CD4-positive, alpha-beta memory T cell (primary cell): ENCODE measurements at regions of chr16 and their contacts with region 1.

Region 1: GRCh38 chr16:352547-353403 is at the start of gene AXIN1:
- DNase-seq: peak; percentile 97 to 100 (median 99)
- H3K4me3 ChIP-seq: peak within 1 kb of the TSS in 1 of 2 donors; percentile 50
- H3K4me3 Mint-ChIP-seq: peak within 1 kb of the TSS; percentile 92 to 96 (median 93)
- H3K27ac ChIP-seq: peak within 1 kb of the TSS; percentile 57
- H3K27ac Mint-ChIP-seq: peak within 1 kb of the TSS; percentile 88 to 97 (median 94)
- H3K4me1 ChIP-seq: peaks cover 70% of the 10 kb centered on the region
- H3K4me1 Mint-ChIP-seq: peaks cover 25 to 69% (median 51%) of the 10 kb centered on the region in 4 donors
- H3K27me3 ChIP-seq: no peaks in the 10 kb centered on the region
- H3K27me3 Mint-ChIP-seq: no peaks in the 10 kb centered on the region
- total RNA-seq, gene AXIN1: 40.3 to 43.0 TPM

Region 2: GRCh38 chr16:228818-229730 is 123.7 kb before region 1 on chr16 and contains the start of gene LUC7L:
- CTCF ChIA-PET with region 1: interaction called, 9 read pairs
- POLR2A ChIA-PET with region 1: interaction called, 25 read pairs
- intact Hi-C with region 1: loop called (anchors 1 kb)
- DNase-seq: peak; percentile 82 to 89 (median 85)
- H3K4me3 ChIP-seq: peak within 1 kb of the TSS; percentile 48 to 84
- H3K4me3 Mint-ChIP-seq: peak within 1 kb of the TSS; percentile 86 to 96 (median 90)
- H3K27ac ChIP-seq: peak within 1 kb of the TSS; percentile 97
- H3K27ac Mint-ChIP-seq: peak within 1 kb of the TSS; percentile 91 to 98 (median 96)
- H3K4me1 ChIP-seq: peaks cover 23% of the 10 kb centered on the region
- H3K4me1 Mint-ChIP-seq: peaks cover 15 to 41% (median 33%) of the 10 kb centered on the region in 4 donors
- H3K27me3 ChIP-seq: no peaks in the 10 kb centered on the region
- H3K27me3 Mint-ChIP-seq: no peaks in the 10 kb centered on the region
- total RNA-seq, gene LUC7L: 147 to 157 TPM

Region 3: DNA sequence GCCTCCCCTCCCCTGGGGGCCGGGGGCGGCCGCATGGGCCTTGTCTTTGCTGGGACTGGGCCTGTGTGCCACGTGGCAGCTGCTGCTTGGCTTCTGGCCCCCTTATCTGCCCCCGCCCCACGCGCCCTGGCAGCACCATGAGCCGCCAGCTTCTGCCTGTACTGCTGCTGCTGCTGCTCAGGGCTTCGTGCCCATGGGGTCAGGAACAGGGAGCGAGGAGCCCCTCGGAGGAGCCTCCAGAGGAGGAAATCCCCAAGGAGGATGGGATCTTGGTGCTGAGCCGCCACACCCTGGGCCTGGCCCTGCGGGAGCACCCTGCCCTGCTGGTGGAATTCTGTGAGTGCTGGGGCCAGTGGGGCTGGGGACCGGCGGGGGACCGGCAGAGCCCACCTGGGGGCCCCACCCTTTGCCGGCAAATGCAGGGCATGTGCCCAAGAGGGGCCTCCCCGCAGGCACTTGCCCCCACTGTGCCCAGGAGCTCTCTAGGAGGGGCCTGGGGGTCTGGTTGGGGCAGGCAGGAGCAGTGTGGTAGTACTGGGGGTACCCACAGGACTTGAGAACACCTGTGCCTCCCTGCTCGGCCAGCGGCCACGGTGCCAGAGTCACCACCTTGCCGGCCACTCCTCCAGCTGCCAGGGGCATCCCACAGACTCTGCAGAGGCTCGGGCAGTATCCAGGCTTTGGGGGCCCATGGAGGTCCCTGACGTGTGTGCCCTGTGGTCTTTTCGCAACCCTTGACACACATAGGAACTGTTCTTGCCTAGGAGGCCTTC is 69.6 kb before region 1 on chr16 and contains the start of gene PDIA2:
- CTCF ChIA-PET with region 1: no interaction called
- POLR2A ChIA-PET with region 1: no interaction called
- intact Hi-C with region 1: no loop called
- DNase-seq: no peak
- H3K4me3 ChIP-seq: no peak within 1 kb of the TSS
- H3K4me3 Mint-ChIP-seq: no peak within 1 kb of the TSS
- H3K27ac ChIP-seq: no peak within 1 kb of the TSS
- H3K27ac Mint-ChIP-seq: peak within 1 kb of the TSS in 1 of 7 donors; percentile 75
- H3K4me1 ChIP-seq: peaks cover 10% of the 10 kb centered on the region
- H3K4me1 Mint-ChIP-seq: peaks cover 6 to 8% (median 7%) of the 10 kb centered on the region in 4 donors
- H3K27me3 ChIP-seq: no peaks in the 10 kb centered on the region
- H3K27me3 Mint-ChIP-seq: peaks cover 0 to 4% of the 10 kb centered on the region in 2 donors
- total RNA-seq, gene PDIA2: not detected

Region 4: GRCh38 chr16:324451-325334 is 28.1 kb before region 1 on chr16:
- CTCF ChIA-PET with region 1: no interaction called
- POLR2A ChIA-PET with region 1: interaction called, 4 read pairs
- intact Hi-C with region 1: loop called (anchors 2 kb)
- DNase-seq: peak; percentile 88 to 93 (median 90)
- H3K4me3 ChIP-seq: peak overlapping the region; percentile 22 to 60
- H3K4me3 Mint-ChIP-seq: peak overlapping the region; percentile 69 to 85 (median 80)
- H3K27ac ChIP-seq: peak overlapping the region; percentile 62
- H3K27ac Mint-ChIP-seq: peak overlapping the region; percentile 94 to 99 (median 97)
- H3K4me1 ChIP-seq: peaks cover 75% of the 10 kb centered on the region
- H3K4me1 Mint-ChIP-seq: peaks cover 40 to 77% (median 50%) of the 10 kb centered on the region in 4 donors
- H3K27me3 ChIP-seq: no peaks in the 10 kb centered on the region
- H3K27me3 Mint-ChIP-seq: no peaks in the 10 kb centered on the region

Region 5: GRCh38 chr16:381789-382717 is 29.3 kb after region 1 on chr16 and contains the start of gene PGAP6:
- CTCF ChIA-PET with region 1: no interaction called
- POLR2A ChIA-PET with region 1: interaction called, 5 read pairs
- intact Hi-C with region 1: loop called (anchors 2 kb)
- DNase-seq: peak in 4 of 5 donors; percentile 51 to 72 (median 62)
- H3K4me3 ChIP-seq: peak within 1 kb of the TSS; percentile 47 to 74
- H3K4me3 Mint-ChIP-seq: peak within 1 kb of the TSS; percentile 85 to 95 (median 93)
- H3K27ac ChIP-seq: peak within 1 kb of the TSS; percentile 59
- H3K27ac Mint-ChIP-seq: peak within 1 kb of the TSS; percentile 61 to 94 (median 88)
- H3K4me1 ChIP-seq: peaks cover 37% of the 10 kb centered on the region
- H3K4me1 Mint-ChIP-seq: peaks cover 10 to 31% (median 21%) of the 10 kb centered on the region in 4 donors
- H3K27me3 ChIP-seq: no peaks in the 10 kb centered on the region
- H3K27me3 Mint-ChIP-seq: no peaks in the 10 kb centered on the region
- total RNA-seq, gene PGAP6: 72.2 to 73.5 TPM

Region 6: GRCh38 chr16:425082-425718 is 72.4 kb after region 1 on chr16 and contains the start of gene RAB11FIP3:
- CTCF ChIA-PET with region 1: no interaction called
- POLR2A ChIA-PET with region 1: interaction called, 4 read pairs
- intact Hi-C with region 1: loop called (anchors 2 kb)
- DNase-seq: peak; percentile 83 to 89 (median 86)
- H3K4me3 ChIP-seq: peak within 1 kb of the TSS; percentile 65 to 83
- H3K4me3 Mint-ChIP-seq: peak within 1 kb of the TSS; percentile 86 to 94 (median 90)
- H3K27ac ChIP-seq: peak within 1 kb of the TSS; percentile 80
- H3K27ac Mint-ChIP-seq: peak within 1 kb of the TSS; percentile 87 to 98 (median 93)
- H3K4me1 ChIP-seq: peaks cover 35% of the 10 kb centered on the region
- H3K4me1 Mint-ChIP-seq: peaks cover 20 to 41% (median 31%) of the 10 kb centered on the region in 4 donors
- H3K27me3 ChIP-seq: no peaks in the 10 kb centered on the region
- H3K27me3 Mint-ChIP-seq: no peaks in the 10 kb centered on the region
- total RNA-seq, gene RAB11FIP3: 41.8 to 42.6 TPM